ENCODE measurements at regions of chr17 and their contacts with region 1.

Region 1: DNA sequence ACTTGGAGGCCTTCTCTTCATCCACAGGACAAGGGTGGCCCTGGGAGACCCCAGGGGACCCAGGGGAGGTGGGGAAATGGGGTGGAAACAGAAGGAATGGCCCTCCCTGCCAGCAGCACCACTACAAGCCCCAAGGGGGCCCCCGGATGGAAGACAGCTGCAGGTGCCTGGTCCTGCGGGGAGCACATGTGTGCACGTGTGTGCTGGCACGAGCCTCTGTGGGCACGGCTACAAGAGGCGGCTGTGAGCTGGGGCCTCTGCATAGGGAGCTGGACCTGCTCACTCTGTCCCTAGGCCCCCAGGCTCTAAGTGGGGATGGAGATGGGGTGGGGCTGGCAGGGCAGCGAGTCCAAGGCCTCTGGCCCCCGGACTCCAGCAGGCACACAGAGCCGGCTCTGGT is 13.2 kb upstream of the AATK start:
- DNase-seq: no peak
- H3K4me3 ChIP-seq: no peak overlapping the region
- H3K27ac ChIP-seq: no peak overlapping the region
- H3K4me1 ChIP-seq: peaks cover 0 to under 1% (median 0%) of the 10 kb centered on the region in 4 experiments; a peak in 1 of 7 replicates
- H3K27me3 ChIP-seq: no peaks in the 10 kb centered on the region
- CTCF ChIP-seq: no peak
- EP300 ChIP-seq: no peak
- POLR2A ChIP-seq: no peak
- RAD21 ChIP-seq: no peak

Region 2: DNA sequence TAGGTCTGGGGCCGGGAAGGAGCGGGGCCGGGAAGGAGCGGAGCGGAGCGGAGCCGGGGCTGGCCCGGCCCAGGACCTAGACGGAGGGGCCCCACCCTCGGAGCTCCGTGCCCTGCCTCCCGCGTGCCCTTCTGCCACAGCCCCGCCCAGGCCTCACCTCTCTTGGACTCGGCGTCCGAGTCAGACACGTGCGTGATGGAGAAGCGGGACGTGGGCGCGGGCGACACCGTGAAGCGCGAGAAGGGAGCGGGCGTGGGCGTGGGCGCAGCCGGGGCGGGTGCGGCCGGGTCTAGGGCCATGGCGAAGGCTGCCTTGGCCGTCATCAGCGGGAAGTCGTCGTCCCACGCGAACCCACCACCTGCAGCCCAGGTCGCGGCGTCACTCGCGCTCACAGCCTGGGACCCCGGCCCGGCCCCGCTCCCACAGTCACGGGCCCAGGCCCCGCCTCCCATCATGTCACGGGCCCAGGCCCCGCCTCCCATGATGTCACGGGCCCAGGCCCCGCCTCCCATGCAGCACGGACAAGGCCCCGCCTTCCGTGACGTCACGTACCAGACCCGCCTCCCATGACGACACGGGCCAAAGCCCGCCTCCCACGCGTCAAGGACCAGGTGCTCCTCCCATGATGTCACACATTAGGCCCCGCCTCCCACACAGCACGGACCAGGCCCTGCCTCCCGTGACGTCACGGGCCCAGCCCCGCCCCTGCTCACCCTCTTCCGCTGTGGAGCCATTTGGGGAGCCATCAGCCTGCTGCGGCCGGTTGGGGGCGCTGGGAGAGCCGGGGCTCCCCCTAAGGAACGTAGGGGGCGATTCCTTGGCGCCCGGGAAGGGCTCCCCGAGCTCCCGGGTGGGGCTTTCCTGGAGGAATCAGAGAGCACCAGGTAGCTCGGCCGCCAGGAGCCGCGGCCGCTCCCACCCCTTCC is 59.7 kb before region 1 on chr17:
- CTCF ChIA-PET with region 1: interaction called, 13 read pairs
- POLR2A ChIA-PET with region 1: interaction called, 3 read pairs
- DNase-seq: peak; percentile 82 to 100
- H3K4me3 ChIP-seq: peak overlapping the region; percentile 26 to 66 (median 50)
- H3K27ac ChIP-seq: no peak overlapping the region
- H3K4me1 ChIP-seq: peaks cover 0 to 16% (median 6%) of the 10 kb centered on the region in 4 experiments; a peak in 5 of 7 replicates
- H3K27me3 ChIP-seq: peaks cover 0 to 11% (median 7%) of the 10 kb centered on the region in 4 experiments; a peak in 3 of 7 replicates
- CTCF ChIP-seq: peak; percentile 32 to 54 (median 50)
- EP300 ChIP-seq: peak in 1 of 2 experiments; percentile 53; a peak in 1 of 3 replicates
- POLR2A ChIP-seq: 0 out of 3 replicates have a peak, but pooled peaks of 1 of the 2 experiments have one; percentile 22
- RAD21 ChIP-seq: peak; percentile 19 to 30; a peak in 2 of 4 replicates

Region 3: GRCh38 chr17:81189670-81190530 is 10.7 kb after region 1 on chr17:
- CTCF ChIA-PET with region 1: interaction called, 11 read pairs
- POLR2A ChIA-PET with region 1: no interaction called
- DNase-seq: no peak
- H3K4me3 ChIP-seq: no peak overlapping the region
- H3K27ac ChIP-seq: no peak overlapping the region
- H3K4me1 ChIP-seq: no peaks in the 10 kb centered on the region
- H3K27me3 ChIP-seq: no peaks in the 10 kb centered on the region
- CTCF ChIP-seq: peak; percentile 62 to 69 (median 64)
- EP300 ChIP-seq: no peak
- POLR2A ChIP-seq: no peak
- RAD21 ChIP-seq: peak; percentile 64 to 75

Measured in H1 (cell line).